Panc1 (cell line): ENCODE measurements at regions of chr17 and their contacts with region 1.

Region 1: DNA sequence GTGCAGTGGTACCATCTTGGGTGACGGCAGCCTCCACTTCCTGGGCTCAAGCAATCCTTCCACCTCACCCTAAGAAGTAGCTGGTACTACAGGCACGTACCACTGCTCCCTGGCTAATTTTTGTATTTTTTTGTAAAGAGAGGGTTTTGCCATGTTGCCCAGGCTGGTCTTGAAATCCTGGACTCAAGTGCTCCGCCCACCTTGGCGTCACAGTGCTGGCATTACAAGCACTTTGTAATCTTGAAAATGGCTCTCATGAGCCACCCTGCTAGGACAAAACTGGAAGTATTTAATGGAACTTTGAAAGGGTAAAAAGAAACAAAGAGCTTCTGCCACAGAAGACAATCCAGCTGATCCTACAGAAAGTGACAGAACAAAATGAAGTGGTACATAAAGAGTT is 9.2 kb downstream of the SUMO2 start:
- DNase-seq: no peak
- ATAC-seq: no peak
- H3K4me3 ChIP-seq: no peak overlapping the region
- H3K27ac ChIP-seq: no peak overlapping the region
- H3K4me1 ChIP-seq: no peaks in the 10 kb centered on the region
- H3K27me3 ChIP-seq: no peaks in the 10 kb centered on the region
- CTCF ChIP-seq: no peak

Region 2: DNA sequence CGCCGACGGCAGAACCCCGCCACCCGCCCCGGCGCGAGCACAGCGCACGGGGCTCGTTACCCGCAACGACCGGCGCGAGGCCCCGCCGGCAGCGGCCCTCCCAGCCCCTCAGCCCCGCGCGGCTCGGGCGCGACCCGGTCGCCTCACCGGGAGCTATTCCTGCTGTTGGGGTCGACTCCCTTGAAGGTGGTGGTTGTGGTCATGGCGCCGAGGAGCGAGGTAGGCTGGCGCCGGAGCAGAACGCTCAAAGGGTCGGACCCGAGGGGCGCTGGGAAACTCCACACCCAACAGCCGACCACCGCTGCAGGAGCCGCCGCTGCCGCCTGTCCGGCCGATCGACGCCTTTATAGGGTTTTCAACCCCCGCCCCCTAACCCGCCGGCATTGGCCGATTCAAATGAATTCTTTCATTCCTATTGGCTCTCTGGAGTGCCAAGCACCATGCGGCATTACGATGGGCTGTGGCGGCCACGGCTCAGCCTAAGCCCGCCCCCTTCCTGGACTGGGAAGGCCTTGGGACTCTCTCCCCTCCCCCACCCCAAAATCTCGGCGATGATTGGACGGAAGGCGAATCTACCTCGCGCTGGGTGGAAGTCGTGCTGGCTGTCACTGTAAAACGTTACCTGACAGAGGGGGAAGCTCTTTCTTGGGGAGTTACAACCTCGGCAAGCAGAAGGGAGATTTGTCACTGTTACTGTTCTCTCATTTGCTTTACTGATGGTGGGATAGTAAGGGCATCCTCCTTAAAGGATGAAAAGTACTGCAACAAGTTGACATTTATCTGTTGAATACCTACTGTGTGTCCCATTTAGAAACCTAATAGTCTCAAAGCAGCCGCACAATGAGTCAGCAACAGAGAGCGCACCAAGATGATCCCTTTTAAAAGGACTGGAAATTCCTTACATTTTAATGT is 19.1 kb before region 1 on chr17 and contains the start of gene JPT1:
- CTCF ChIA-PET with region 1: interaction called, 6 read pairs
- POLR2A ChIA-PET with region 1: interaction called, 15 read pairs
- in situ Hi-C with region 1: no loop called
- intact Hi-C with region 1: no loop called
- DNase-seq: peak; percentile 96
- ATAC-seq: peak; percentile 95
- H3K4me3 ChIP-seq: peak within 1 kb of the TSS; percentile 84 to 85
- H3K27ac ChIP-seq: peak within 1 kb of the TSS; percentile 92
- H3K4me1 ChIP-seq: peaks cover 24% of the 10 kb centered on the region
- H3K27me3 ChIP-seq: no peaks in the 10 kb centered on the region
- CTCF ChIP-seq: no peak
- total RNA-seq, gene JPT1: 448 TPM